Left colon (tissue), 2 donors: ENCODE measurements at regions of chr1 and their contacts with region 1.

Region 1: GRCh38 chr1:245156081-245156735 is 1.4 kb downstream of the KIF26B start:
- DNase-seq: peak; percentile 77 to 86
- ATAC-seq: peak; percentile 98

Region 2: GRCh38 chr1:244835276-244836134 is 320.7 kb before region 1 on chr1 and contains the start of gene COX20:
- intact Hi-C with region 1: no loop called
- DNase-seq: peak; percentile 88 to 94
- ATAC-seq: peak; percentile 80
- total RNA-seq, gene COX20: 21.8 to 30.5 TPM

Region 3: GRCh38 chr1:245060684-245061374 is 95.4 kb before region 1 on chr1:
- intact Hi-C with region 1: no loop called
- DNase-seq: peak; percentile 87 to 88
- ATAC-seq: peak; percentile 93

Region 4: DNA sequence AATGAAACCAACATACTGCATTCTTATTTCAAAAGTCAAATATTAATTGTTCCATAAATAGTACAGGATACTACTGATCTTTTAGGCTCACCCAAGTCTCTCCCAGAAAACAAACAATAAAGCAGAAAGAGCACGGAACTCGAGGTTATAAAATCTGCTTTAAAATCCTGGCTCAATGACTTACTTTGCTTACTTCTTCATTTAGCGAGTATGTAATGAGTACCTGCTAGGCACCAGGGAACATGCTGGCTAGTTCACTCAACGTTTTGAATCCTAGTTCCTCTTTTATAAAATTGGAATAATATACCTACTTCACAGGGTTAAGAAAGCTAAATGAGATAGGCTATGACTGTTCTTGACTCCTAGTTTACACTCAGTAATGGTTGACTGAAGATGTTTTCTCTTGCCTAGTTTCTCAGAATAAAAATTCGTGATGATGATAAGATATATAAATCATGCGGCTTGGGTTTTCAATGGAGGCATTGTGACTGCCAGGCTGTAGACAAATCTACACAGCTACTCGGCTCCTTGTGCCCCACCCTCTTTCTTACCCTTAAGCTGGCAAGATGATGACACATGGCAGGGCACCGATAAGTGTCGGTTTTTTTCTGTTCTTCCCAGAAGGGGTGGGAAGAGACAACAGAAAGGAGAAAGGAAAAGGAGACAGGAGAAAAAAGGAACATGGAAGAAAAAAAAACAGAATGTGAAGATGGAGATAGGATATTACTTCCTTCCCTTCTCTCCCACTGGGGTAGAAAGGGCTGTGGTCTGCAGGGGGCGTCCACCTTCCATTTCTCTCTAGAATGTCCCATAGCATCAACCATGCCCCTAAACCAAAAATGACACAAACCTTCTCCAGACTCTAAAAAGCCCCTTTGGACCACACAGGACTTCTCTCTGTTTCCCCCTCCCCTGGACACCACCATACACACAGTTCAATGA is 843.8 kb after region 1 on chr1:
- intact Hi-C with region 1: loop called (anchors 5 to 10 kb)
- DNase-seq: no peak
- ATAC-seq: peak; percentile 37

Region 5: DNA sequence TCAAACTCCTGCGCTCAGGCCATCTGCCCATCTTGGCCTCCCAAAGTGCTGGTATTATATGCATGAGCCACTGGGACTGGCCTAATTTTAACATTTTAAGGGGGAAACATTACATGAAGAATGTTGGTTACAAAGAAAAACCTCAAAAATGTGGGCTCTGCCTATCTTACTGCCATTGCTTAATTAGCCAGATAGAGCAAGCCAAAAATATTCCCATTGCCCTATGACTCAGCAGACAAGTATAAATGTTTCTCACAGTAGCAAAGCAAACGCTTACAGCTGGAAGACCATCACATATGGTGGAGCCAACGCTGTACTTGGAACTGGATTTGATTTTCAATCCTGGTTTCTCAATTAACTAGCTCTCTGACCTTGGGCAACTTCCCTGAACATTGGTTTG is 848.9 kb after region 1 on chr1:
- intact Hi-C with region 1: loop called in 1 of 2 experiments (anchors 5 kb)
- DNase-seq: no peak
- ATAC-seq: no peak

Region 6: GRCh38 chr1:246497331-246497915 is 1341.2 kb after region 1 on chr1:
- intact Hi-C with region 1: loop called in 1 of 2 experiments (anchors 2 kb)
- DNase-seq: no peak
- ATAC-seq: peak; percentile 52